ENCODE measurements at regions of chr5 and their contacts with region 1.

Region 1: DNA sequence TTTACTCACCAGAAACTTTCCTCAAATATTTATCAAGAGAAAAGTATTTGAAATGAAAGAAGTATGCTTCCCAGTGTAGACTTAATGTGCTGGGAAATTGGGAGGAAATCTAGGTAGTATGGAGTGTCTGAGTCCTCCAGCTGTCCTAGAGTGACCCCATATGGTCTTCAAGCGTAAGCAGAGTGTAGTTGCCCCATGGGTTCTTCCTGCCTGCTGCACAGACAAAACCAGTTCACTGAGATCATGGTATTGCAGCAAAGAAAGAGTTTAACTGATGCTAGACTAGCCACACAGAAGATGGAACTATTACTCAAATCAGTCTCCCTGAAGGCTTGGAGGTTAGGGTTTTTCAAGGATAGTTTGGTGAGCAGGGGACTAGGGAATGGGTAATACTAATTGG is 114.9 kb upstream of the PRLR start:
- DNase-seq: no peak
- H3K4me3 ChIP-seq: no peak overlapping the region
- H3K27ac ChIP-seq: no peak overlapping the region
- H3K4me1 ChIP-seq: no peaks in the 10 kb centered on the region
- H3K27me3 ChIP-seq: no peaks in the 10 kb centered on the region
- CTCF ChIP-seq: no peak

Region 2: DNA sequence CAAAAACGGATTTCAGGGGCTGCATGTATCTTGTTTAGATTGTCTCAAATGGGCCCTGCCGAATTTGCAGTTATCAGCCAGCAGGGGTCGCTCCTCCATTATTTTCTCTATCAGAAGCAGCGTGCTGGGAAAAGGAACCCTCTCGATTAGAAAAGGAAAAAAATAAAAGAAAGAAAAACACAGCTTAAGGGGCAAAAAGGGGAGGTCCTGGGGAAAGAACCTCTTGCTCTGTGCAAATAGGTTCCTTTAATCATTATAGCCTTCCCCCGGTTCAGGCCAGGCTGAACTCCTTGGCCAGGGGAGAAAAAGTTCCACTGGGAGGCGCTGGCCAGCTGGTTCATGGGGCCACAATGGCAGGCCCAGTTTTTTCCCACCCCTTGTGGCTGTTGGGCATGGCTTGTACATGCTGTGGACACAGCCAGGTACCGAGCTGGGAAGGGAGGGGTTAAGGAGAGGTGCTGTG is 618.2 kb after region 1 on chr5:
- intact Hi-C with region 1: loop called (anchors 5 kb)
- DNase-seq: no peak
- H3K4me3 ChIP-seq: no peak overlapping the region
- H3K27ac ChIP-seq: no peak overlapping the region
- H3K4me1 ChIP-seq: no peaks in the 10 kb centered on the region
- H3K27me3 ChIP-seq: no peaks in the 10 kb centered on the region
- CTCF ChIP-seq: no peak

Measured in tibial artery (tissue), 4 donors.